ENCODE measurements at regions of chr3 and their contacts with region 1.

Region 1: DNA sequence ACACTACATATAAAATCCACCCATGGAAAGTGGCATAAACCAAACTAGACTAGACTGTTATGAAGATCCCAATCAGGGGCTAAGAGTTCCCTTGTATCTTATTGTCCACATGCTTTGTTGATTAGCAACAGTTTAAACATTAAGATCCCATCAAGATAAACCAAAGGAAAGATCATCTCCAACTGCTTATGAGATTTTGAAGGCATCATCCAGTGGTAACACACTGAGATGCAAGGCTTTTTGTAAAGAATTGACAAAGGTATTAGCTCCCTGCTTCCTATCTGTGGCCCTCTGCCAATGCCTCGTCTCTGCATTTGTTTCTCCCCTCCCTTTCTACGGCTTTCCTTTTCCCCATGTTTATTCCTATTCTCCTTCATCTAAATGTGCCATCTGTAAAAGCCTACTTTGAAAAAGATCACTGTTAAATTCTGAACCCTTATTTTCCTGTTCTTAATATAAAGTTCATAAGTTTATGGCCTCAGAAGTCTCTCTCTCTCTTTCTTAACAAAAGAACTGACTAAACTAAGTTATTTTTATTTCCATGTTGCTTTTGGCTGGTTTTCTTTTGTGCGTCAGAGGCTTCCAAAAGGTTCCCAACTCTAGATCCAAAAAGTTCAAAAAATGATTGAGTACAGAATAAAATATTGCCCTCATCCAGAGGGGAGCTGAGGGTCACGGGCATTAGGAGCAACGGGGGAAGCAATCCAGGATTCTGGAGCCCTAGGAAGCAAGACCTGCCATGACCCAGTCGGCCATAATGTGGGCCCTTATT is 5.5 kb downstream of the PLD1 start:
- DNase-seq: no peak
- H3K4me3 ChIP-seq: no peak overlapping the region
- H3K27ac ChIP-seq: peak overlapping the region; percentile 80
- H3K4me1 ChIP-seq: peaks cover 63% of the 10 kb centered on the region
- H3K27me3 ChIP-seq: no peaks in the 10 kb centered on the region
- CTCF ChIP-seq: no peak
- POLR2A ChIP-seq: no peak

Region 2: DNA sequence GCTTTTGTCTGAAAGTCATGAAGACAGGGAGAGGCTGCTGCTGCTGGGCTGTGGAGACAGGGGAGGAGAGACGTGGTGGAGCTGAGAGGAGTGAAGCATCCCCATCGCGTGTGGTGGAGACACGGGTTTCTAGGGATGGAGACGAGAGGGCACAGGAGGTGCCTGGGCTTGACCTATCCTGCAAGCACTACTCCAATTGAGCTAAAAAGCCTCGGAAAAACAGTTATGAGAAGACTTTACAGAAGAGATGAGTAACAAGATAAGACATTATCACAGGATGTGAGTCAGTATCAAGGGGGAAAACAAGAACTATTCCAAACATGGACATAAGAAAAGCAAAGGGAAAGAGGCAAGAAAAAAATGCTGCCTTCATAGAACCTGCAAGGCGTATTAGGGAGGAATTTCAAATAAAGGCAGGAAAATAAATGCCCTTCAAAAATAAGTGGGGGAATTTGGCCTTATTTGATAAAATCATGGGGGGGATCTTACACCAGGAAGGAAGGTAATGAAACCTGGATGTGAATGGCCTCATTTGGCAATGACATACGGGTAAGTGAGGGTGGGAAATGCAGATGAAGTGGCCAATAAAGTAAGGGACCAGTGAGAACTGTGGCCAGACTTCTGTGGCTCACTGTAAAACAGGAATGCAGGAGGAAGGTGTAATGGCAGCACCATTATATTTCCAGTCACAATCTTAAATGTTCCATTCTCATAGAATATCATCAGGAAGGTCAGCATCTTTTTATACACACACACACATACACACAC is 92.4 kb before region 1 on chr3:
- intact Hi-C with region 1: no loop called
- DNase-seq: no peak
- H3K4me3 ChIP-seq: no peak overlapping the region
- H3K27ac ChIP-seq: no peak overlapping the region
- H3K4me1 ChIP-seq: no peaks in the 10 kb centered on the region
- H3K27me3 ChIP-seq: no peaks in the 10 kb centered on the region
- CTCF ChIP-seq: no peak
- POLR2A ChIP-seq: no peak

Region 3: DNA sequence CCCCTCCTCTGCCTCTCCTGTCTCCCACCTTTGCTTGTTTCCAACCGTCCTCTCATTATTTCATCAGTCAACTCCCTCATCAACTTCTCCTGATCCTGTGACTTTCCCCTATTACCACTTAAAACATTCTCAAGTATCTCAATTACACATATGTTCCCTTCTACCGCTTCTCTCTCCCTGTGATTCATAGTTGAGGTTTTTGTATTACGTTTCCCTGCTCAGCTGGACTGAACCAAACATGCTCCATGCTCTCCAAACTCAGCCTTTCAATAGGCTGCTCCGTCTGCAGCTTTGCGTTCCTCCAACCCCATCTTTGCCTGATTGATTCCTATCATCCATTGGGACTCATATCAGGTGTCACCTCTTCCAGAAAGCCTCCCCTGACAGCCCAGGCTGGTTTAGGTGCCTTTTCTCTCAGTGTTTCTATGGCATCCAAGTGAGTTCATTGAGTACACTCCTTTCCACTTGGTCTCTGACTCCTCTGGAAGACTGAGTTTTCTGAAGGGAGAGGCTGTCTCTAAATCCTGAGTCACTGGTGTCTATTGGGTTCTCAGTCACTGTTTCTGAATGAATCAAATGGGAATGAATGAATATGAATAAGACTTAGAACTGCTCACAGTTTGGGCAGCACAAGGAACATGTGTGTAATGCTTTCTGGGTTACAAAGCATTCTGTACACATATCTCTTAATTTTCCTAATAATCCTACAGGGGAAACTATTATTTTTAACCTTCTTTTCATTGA is 51.0 kb before region 1 on chr3:
- intact Hi-C with region 1: no loop called
- DNase-seq: no peak
- H3K4me3 ChIP-seq: no peak overlapping the region
- H3K27ac ChIP-seq: no peak overlapping the region
- H3K4me1 ChIP-seq: peaks cover 70% of the 10 kb centered on the region
- H3K27me3 ChIP-seq: no peaks in the 10 kb centered on the region
- CTCF ChIP-seq: no peak
- POLR2A ChIP-seq: no peak

Region 4: GRCh38 chr3:171833789-171834460 is 29.1 kb after region 1 on chr3:
- intact Hi-C with region 1: loop called (anchors 2 kb)
- DNase-seq: no peak
- H3K4me3 ChIP-seq: no peak overlapping the region
- H3K27ac ChIP-seq: peak overlapping the region; percentile 7
- H3K4me1 ChIP-seq: peaks cover 18% of the 10 kb centered on the region
- H3K27me3 ChIP-seq: no peaks in the 10 kb centered on the region
- CTCF ChIP-seq: peak in 1 of 3 experiments; percentile 27
- POLR2A ChIP-seq: no peak